A673 (cell line): ENCODE measurements at regions of chr20 and their contacts with region 1.

Region 1: GRCh38 chr20:22691369-22692118 is 107.2 kb upstream of the FOXA2 start:
- DNase-seq: peak; percentile 69
- H3K4me3 ChIP-seq: no peak overlapping the region
- H3K27ac ChIP-seq: no peak overlapping the region
- H3K4me1 ChIP-seq: no peaks in the 10 kb centered on the region
- H3K27me3 ChIP-seq: no peaks in the 10 kb centered on the region
- CTCF ChIP-seq: peak; percentile 83

Region 2: GRCh38 chr20:22815603-22816315 is 124.2 kb after region 1 on chr20:
- CTCF ChIA-PET with region 1: no interaction called
- POLR2A ChIA-PET with region 1: no interaction called
- intact Hi-C with region 1: no loop called
- DNase-seq: no peak
- H3K4me3 ChIP-seq: no peak overlapping the region
- H3K27ac ChIP-seq: no peak overlapping the region
- H3K4me1 ChIP-seq: no peaks in the 10 kb centered on the region
- H3K27me3 ChIP-seq: no peaks in the 10 kb centered on the region
- CTCF ChIP-seq: no peak

Region 3: GRCh38 chr20:23245553-23246181 is 554.1 kb after region 1 on chr20:
- CTCF ChIA-PET with region 1: no interaction called
- POLR2A ChIA-PET with region 1: no interaction called
- intact Hi-C with region 1: loop called (anchors 10 kb)
- DNase-seq: no peak
- H3K4me3 ChIP-seq: no peak overlapping the region
- H3K27ac ChIP-seq: no peak overlapping the region
- H3K4me1 ChIP-seq: no peaks in the 10 kb centered on the region
- H3K27me3 ChIP-seq: peaks cover 3% of the 10 kb centered on the region
- CTCF ChIP-seq: peak; percentile 35

Region 4: GRCh38 chr20:23340524-23340923 is 649.0 kb after region 1 on chr20:
- CTCF ChIA-PET with region 1: interaction called, 39 read pairs
- POLR2A ChIA-PET with region 1: no interaction called
- intact Hi-C with region 1: loop called (anchors 1 kb)
- DNase-seq: peak; percentile 78
- H3K4me3 ChIP-seq: no peak overlapping the region
- H3K27ac ChIP-seq: no peak overlapping the region
- H3K4me1 ChIP-seq: peaks cover 4% of the 10 kb centered on the region
- H3K27me3 ChIP-seq: no peaks in the 10 kb centered on the region
- CTCF ChIP-seq: peak; percentile 71